Sigmoid colon (tissue), 7 donors: ENCODE measurements at regions of chr16 and their contacts with region 1.

Region 1: DNA sequence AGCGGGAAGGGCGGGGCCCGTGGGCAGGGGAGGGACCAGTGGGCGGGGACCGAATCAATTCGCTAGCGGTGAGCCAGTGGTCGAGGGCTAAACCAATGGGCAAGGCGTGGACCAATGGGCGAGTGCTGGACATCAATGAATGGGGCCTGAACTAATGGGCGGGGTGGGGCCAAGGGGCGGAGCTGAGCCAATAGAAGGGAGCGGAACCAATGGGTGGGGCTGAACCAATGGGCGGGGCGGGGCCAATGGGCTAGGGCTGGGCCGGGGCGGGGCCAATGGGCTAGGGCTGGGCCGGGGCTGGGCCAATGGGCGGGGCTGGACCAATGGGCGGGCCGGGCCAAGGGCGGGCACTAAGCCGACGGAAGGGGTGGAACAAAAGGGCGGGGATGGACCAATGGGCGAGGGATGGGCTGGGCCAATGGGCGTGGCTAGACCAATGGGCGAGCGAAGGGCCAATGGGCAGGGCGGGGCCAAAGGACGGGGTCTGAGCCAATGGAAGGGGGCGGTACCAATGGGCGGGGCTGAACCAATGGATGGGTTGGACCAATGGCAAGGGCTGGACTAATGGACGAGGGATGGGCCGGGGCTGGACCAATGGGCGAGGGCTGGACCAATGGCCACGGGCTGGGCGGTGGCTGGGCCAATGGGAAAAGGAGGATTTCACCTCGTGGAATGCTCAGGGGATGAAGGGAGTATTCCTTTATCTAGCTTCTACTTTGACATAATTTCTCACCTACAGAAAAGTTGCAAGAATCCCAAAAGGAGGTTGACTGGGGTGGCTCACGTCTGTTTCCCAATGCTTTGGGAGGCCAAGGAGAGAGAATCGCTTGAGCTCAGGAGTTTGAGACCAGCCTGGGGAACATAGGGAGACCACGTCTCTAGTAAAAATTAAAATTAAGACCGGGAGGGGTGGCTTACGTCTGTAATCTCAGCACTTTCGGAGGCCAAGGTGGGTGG is 6.0 kb upstream of the FLYWCH1 start:
- DNase-seq: peak; percentile 100
- H3K4me3 ChIP-seq: peak overlapping the region; percentile 50 to 77 (median 70)
- H3K27ac ChIP-seq: peak overlapping the region; percentile 90 to 96 (median 92)
- H3K4me1 ChIP-seq: peaks cover 0 to 21% (median 17%) of the 10 kb centered on the region in 4 donors
- H3K27me3 ChIP-seq: no peaks in the 10 kb centered on the region
- CTCF ChIP-seq: no peak
- EP300 ChIP-seq: no peak
- POLR2A ChIP-seq: no peak

Region 2: DNA sequence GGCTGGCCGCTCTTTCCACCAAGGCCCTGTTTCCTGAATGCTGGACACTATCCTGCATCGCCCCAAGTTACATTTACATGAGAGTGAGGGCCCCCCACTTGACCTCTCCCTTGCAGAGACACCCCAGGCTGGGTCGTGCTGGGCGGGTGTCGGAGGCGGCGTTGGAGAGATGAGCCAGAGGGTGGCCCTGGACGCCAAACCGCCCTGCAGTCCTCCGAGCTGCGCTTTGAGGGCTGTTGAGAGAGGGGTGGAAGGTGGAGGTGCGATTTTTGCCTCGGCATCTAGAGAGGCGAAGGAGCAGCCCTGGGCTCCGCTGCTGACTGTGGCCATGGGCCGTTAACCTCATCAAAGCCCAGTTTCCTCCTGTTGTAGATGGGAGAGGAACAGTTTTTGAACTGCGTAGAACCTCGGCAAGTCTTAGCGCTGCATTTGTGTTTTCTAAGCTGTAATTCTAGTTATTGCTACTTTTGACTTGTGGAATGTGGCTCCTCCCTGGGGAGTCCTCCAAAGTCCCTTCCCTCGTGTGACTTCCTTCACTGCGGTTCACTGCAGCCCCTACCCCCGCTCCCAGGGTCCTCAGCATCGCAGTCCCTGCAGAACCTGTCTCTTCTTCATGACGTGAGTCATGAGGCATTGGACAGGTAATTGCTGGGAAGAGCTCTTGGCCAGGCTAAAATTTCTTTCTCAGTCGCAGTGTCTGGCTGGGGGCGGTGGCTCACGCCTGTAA is 127.6 kb before region 1 on chr16:
- intact Hi-C with region 1: no loop called
- DNase-seq: peak; percentile 63
- H3K4me3 ChIP-seq: peak overlapping the region; percentile 68 to 99 (median 88)
- H3K27ac ChIP-seq: peak overlapping the region; percentile 93 to 100 (median 98)
- H3K4me1 ChIP-seq: peaks cover 4 to 33% (median 26%) of the 10 kb centered on the region in 4 donors
- H3K27me3 ChIP-seq: no peaks in the 10 kb centered on the region
- CTCF ChIP-seq: no peak
- EP300 ChIP-seq: no peak
- POLR2A ChIP-seq: no peak

Region 3: GRCh38 chr16:2883027-2883851 is 22.5 kb before region 1 on chr16 and contains the start of gene FLYWCH2:
- intact Hi-C with region 1: loop called (anchors 2 kb)
- DNase-seq: peak; percentile 99
- H3K4me3 ChIP-seq: peak within 1 kb of the TSS; percentile 67 to 99 (median 80)
- H3K27ac ChIP-seq: peak within 1 kb of the TSS; percentile 94 to 100 (median 98)
- H3K4me1 ChIP-seq: peaks cover 0 to 16% (median 10%) of the 10 kb centered on the region in 4 donors
- H3K27me3 ChIP-seq: no peaks in the 10 kb centered on the region
- CTCF ChIP-seq: peak in 1 of 4 experiments; percentile 13
- EP300 ChIP-seq: no peak
- POLR2A ChIP-seq: peak; percentile 14 to 59
- total RNA-seq, gene FLYWCH2: 33.6 to 64.2 (median 55.8) TPM

Region 4: DNA sequence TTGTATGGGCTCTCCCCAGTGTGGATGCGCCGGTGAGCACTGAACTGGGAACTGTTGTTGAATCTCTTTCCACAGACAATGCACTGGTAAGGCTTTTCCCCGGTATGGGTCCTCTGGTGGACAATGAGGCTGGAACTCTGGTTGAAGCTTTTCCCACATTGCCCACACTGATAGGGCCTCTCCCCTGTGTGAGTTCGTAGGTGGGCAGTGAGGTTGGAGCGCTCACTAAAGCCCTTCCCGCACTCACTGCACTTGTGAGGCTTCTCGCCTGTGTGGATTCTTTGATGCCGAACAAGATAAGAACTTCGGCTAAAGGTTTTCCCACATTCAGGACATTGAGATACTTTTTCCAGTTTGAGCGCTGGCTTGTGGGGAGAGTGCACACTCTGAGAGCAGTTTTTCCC is 477.3 kb after region 1 on chr16:
- intact Hi-C with region 1: no loop called
- DNase-seq: no peak
- H3K4me3 ChIP-seq: no peak overlapping the region
- H3K27ac ChIP-seq: no peak overlapping the region
- H3K4me1 ChIP-seq: no peaks in the 10 kb centered on the region
- H3K27me3 ChIP-seq: no peaks in the 10 kb centered on the region
- CTCF ChIP-seq: no peak
- EP300 ChIP-seq: no peak
- POLR2A ChIP-seq: no peak